Activated B cell treated with CpG ODN at 0.5 μM for 24 hours (primary cell): ENCODE measurements at regions of chr4 and their contacts with region 1.

Region 1: GRCh38 chr4:179307297-179308136 is 1865.3 kb upstream of the AGA start:
- DNase-seq: no peak
- ATAC-seq: no peak
- H3K4me3 Mint-ChIP-seq: no peak overlapping the region
- H3K27ac Mint-ChIP-seq: no peak overlapping the region
- H3K4me1 Mint-ChIP-seq: no peaks in the 10 kb centered on the region
- H3K27me3 Mint-ChIP-seq: no peaks in the 10 kb centered on the region
- CTCF ChIP-seq: no peak

Region 2: DNA sequence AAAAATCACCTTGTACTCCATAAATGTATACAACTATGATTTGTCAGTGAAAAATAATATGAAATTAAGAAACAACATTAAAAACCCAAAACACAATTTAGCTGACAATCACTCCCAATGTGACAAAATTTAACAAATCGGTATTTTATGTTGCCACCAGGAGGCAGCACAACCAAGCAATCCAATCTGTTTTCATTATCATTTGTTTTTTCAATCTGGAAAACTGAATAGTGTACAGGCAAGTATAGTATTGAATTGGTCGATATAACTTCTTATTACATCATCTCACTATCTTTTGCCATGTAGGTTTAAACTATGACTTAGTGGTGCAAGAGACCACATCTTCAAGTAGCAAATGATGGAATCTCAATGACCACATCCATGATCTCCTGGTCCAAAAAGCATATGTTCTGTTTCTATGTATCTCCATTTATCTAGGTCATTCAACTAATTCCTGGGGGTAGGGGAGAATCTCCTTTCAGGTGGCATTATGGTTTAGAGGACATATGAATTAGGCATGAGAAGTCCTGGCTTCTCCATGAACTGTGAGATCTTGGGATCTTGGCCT is 1752.4 kb before region 1 on chr4:
- CTCF ChIA-PET with region 1: no interaction called
- POLR2A ChIA-PET with region 1: no interaction called
- intact Hi-C with region 1: loop called (anchors 5 kb)
- DNase-seq: no peak
- ATAC-seq: no peak
- H3K4me3 Mint-ChIP-seq: no peak overlapping the region
- H3K27ac Mint-ChIP-seq: no peak overlapping the region
- H3K4me1 Mint-ChIP-seq: no peaks in the 10 kb centered on the region
- H3K27me3 Mint-ChIP-seq: no peaks in the 10 kb centered on the region
- CTCF ChIP-seq: no peak

Region 3: GRCh38 chr4:179051206-179051605 is 256.3 kb before region 1 on chr4:
- CTCF ChIA-PET with region 1: no interaction called
- POLR2A ChIA-PET with region 1: no interaction called
- intact Hi-C with region 1: no loop called
- DNase-seq: no peak
- ATAC-seq: no peak
- H3K4me3 Mint-ChIP-seq: no peak overlapping the region
- H3K27ac Mint-ChIP-seq: no peak overlapping the region
- H3K4me1 Mint-ChIP-seq: no peaks in the 10 kb centered on the region
- H3K27me3 Mint-ChIP-seq: no peaks in the 10 kb centered on the region
- CTCF ChIP-seq: no peak

Region 4: DNA sequence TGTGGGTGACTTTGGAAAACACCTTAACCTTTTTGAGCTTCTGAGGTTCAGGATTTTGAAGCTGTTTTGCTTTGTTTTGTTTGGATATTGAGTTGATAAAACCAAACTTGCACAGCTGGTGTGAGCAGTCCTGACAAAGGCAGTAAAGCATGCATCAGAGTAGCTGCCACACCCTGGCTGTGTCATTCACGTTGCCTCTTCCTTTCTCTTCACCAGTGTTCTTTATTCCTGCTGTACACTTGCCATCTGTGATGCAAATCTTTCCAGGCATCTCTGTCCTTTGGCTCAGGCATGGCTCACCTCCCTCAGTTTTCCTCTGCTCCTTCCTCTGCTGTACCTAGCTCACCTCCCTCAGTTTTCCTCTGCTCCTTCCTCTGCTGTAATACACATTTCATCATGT is 15.0 kb before region 1 on chr4:
- CTCF ChIA-PET with region 1: no interaction called
- POLR2A ChIA-PET with region 1: no interaction called
- intact Hi-C with region 1: no loop called
- DNase-seq: no peak
- ATAC-seq: no peak
- H3K4me3 Mint-ChIP-seq: no peak overlapping the region
- H3K27ac Mint-ChIP-seq: no peak overlapping the region
- H3K4me1 Mint-ChIP-seq: no peaks in the 10 kb centered on the region
- H3K27me3 Mint-ChIP-seq: no peaks in the 10 kb centered on the region
- CTCF ChIP-seq: no peak

Region 5: GRCh38 chr4:179352221-179352620 is 44.7 kb after region 1 on chr4:
- CTCF ChIA-PET with region 1: no interaction called
- POLR2A ChIA-PET with region 1: no interaction called
- intact Hi-C with region 1: no loop called
- DNase-seq: no peak
- ATAC-seq: no peak
- H3K4me3 Mint-ChIP-seq: no peak overlapping the region
- H3K27ac Mint-ChIP-seq: no peak overlapping the region
- H3K4me1 Mint-ChIP-seq: no peaks in the 10 kb centered on the region
- H3K27me3 Mint-ChIP-seq: no peaks in the 10 kb centered on the region
- CTCF ChIP-seq: no peak